Right ventricle myocardium inferior (tissue), 1 donor: ENCODE measurements at regions of chr11 and their contacts with region 1.

Region 1: DNA sequence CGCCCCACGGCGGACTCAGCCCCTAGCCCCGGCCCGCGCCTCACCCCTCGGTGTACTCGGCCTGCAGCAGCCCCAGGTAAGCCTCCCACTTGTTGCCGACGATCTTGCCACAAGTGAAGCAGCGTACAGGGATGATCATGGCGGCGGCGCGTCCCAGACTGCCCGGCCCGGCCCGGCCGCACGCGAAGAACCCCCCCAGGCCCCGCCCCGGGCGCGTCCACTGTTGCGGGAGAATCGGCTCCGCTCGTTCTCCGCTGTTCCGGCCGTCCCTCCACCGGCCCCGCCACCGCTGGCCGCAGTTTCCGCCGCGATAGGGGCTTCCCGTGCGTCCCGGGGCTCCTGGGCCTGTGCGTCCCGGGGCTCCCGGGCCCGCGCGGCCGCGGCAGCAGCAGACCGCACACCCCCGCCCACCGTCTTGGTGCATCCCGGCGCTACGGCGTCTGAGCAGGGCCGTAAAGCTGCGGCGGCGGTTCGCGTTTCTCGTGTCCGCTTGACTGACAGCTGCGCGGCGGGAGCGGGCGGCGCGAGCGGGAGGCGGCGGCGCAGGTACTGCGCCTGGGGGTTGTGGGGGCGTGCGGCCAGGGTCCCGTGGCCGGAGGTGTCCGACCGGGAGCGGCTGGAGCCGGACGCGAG is at the starts of genes POLR2L and TSPAN4:
- DNase-seq: peak; percentile 96
- ATAC-seq: peak; percentile 50
- total RNA-seq, gene POLR2L: 298 TPM
- total RNA-seq, gene TSPAN4: 43.8 TPM

Region 2: DNA sequence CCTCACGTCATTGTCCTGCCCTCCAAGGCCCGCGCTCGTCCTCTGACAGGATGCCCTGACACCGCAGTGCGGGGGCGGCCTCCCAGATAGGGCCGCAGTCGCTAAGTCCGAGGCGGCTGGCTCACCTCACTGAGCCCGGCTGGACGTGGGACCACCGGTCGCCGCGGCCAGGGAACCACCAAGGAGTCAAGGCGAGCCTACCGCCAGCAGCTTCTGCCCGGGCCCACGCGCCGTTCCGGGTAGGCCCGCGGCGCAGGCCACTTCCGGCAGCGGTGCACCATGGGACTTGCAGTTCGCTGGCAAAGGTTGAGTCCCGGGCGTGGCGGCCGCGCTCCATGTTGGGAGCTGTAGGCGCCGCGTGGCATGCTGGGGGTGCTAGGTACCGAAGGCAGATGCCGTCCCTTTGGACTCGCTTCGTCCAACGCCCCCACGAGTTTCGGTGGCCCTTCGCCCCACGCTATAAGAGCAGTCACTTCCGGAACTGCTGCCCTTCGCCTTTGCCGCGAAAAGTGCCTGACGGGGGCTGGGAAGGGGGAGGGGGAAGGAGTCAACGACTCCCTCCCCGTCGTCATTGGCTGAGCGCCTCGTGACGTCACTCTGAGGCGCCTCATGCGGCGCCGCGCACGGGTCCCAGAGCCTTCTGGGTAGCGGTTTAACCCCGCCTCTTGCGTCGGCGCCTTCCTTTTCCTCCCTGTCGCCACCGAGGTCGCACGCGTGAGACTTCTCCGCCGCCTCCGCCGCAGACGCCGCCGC is 33.0 kb before region 1 on chr11 and contains the start of gene RPLP2:
- intact Hi-C with region 1: loop called (anchors 5 kb)
- DNase-seq: peak; percentile 100
- ATAC-seq: peak; percentile 93
- total RNA-seq, gene RPLP2: 1,110 TPM

Region 3: GRCh38 chr11:910589-911195 is 68.2 kb after region 1 on chr11 and contains the start of gene CHID1:
- intact Hi-C with region 1: loop called (anchors 5 kb)
- DNase-seq: peak; percentile 93
- ATAC-seq: peak; percentile 94
- total RNA-seq, gene CHID1: 49.4 TPM